Colonic mucosa (tissue), 4 donors: ENCODE measurements at regions of chr3 and their contacts with region 1.

Region 1: DNA sequence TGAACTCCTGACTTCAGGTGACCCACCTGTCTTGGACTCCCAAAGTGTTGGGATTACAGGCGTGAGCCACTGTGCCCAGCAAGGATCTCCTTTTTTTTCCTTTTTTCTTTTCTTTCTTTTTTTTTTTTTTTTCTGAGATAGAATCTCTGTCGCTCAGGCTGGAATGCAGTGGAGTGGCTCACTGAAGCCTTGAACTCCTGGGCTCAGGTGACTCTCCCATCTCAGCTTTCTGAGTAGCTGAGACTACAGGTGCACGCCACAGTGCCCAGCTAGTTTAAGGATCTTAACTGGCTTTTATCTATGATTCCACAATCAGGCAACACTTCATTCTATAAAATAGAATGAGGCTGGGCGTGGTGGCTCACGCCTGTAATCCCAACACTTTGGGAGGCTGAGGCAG is 16.3 kb upstream of the NICN1 start:
- DNase-seq: no peak
- H3K4me3 ChIP-seq: no peak overlapping the region
- H3K27ac ChIP-seq: no peak overlapping the region
- H3K4me1 ChIP-seq: no peaks in the 10 kb centered on the region
- H3K27me3 ChIP-seq: no peaks in the 10 kb centered on the region
- CTCF ChIP-seq: no peak

Region 2: DNA sequence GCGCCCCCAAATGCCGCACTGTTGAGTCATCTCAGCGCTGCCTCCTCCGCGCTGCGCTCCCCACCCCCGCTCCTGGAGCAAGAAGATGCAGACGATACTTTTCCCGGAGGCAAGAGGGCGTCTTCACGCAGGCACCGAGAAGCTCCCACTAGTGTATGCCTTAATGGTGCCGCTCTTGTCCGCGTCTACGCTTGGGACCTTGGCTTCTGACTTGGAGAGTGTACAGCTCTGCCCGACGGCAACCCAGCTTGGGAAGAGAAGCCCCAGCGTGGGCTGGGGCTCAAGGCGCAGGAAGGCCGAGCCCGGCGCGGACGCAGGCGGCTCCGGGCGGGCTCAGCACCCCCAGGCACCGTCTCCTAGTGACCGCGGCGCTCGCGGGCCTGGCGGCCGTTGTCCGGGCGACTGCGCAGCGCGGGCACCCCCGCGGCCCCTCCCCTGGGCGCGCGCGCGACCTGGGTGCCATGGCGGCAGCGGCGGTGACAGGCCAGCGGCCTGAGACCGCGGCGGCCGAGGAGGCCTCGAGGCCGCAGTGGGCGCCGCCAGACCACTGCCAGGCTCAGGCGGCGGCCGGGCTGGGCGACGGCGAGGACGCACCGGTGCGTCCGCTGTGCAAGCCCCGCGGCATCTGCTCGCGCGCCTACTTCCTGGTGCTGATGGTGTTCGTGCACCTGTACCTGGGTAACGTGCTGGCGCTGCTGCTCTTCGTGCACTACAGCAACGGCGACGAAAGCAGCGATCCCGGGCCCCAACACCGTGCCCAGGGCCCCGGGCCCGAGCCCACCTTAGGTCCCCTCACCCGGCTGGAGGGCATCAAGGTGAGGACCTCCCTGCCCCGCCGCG is 455.4 kb before region 1 on chr3 and contains the start of gene P4HTM:
- intact Hi-C with region 1: loop called (anchors 5 kb)
- DNase-seq: peak; percentile 90
- H3K4me3 ChIP-seq: peak within 1 kb of the TSS; percentile 99
- H3K27ac ChIP-seq: peak within 1 kb of the TSS; percentile 94
- H3K4me1 ChIP-seq: peaks cover 16% of the 10 kb centered on the region
- H3K27me3 ChIP-seq: no peaks in the 10 kb centered on the region
- CTCF ChIP-seq: peak; percentile 23
- total RNA-seq, gene P4HTM: 34.9 to 73.9 TPM

Region 3: DNA sequence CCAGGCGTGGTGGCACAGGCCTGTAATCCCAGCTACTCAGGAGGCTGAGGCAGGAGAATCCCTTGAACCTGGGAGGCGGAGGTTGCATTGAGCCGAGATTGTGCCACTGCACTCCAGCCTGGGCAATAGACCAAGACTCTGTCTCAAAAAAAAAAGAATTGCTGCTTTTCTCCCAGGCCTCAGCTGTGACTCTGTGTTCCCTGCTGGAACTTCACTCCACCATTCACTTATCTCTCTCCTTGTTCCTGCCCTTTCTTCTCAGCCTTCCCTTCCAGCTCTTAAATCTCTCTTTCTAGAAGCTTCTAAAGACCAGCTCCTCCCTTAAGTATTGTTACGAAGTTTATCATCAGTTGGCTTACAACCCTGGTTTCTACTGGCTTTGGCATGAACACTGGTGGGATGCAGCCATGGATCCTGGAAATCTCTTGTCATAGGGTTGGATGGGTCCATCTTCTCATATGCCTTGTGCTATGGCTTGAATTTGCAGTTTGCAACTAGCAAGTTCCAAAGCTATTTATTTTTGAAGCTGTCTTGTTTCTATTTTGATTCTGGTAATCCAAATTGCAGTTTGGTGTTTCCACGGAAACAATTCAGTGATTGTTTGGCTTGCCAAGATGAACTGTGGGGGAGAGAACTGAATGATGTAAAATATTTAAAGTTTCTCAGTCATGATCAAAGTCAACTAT is 178.8 kb before region 1 on chr3:
- intact Hi-C with region 1: no loop called
- DNase-seq: no peak
- H3K4me3 ChIP-seq: no peak overlapping the region
- H3K27ac ChIP-seq: no peak overlapping the region
- H3K4me1 ChIP-seq: no peaks in the 10 kb centered on the region
- H3K27me3 ChIP-seq: no peaks in the 10 kb centered on the region
- CTCF ChIP-seq: no peak

Region 4: GRCh38 chr3:49295489-49296058 is 149.8 kb before region 1 on chr3:
- intact Hi-C with region 1: loop called (anchors 5 kb)
- DNase-seq: no peak
- H3K4me3 ChIP-seq: no peak overlapping the region
- H3K27ac ChIP-seq: no peak overlapping the region
- H3K4me1 ChIP-seq: no peaks in the 10 kb centered on the region
- H3K27me3 ChIP-seq: no peaks in the 10 kb centered on the region
- CTCF ChIP-seq: peak; percentile 52

Region 5: DNA sequence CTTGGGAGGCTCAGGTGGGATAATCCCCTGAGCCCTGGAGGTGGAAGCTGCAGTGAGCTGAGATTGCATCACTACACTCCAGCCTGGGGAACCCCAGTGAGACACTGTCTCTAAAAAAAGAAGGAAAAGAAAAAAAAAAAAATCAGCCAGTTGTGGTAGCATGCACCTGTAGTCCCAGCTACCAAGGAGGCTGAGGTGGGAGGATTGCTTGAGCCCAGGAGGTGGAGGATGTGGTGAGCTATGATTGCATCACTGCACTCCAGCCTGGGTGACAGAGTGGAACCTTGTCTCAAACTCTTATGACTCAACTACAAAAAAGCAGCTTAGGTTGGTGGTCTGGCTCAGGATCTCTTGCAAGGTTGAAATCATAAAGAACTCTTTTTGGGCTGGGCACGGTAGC is 67.9 kb before region 1 on chr3:
- intact Hi-C with region 1: no loop called
- DNase-seq: no peak
- H3K4me3 ChIP-seq: no peak overlapping the region
- H3K27ac ChIP-seq: no peak overlapping the region
- H3K4me1 ChIP-seq: peaks cover under 1% of the 10 kb centered on the region
- H3K27me3 ChIP-seq: no peaks in the 10 kb centered on the region
- CTCF ChIP-seq: no peak

Region 6: GRCh38 chr3:49512771-49513358 is 67.5 kb after region 1 on chr3:
- intact Hi-C with region 1: no loop called
- DNase-seq: no peak
- H3K4me3 ChIP-seq: no peak overlapping the region
- H3K27ac ChIP-seq: no peak overlapping the region
- H3K4me1 ChIP-seq: no peaks in the 10 kb centered on the region
- H3K27me3 ChIP-seq: no peaks in the 10 kb centered on the region
- CTCF ChIP-seq: no peak

Region 7: DNA sequence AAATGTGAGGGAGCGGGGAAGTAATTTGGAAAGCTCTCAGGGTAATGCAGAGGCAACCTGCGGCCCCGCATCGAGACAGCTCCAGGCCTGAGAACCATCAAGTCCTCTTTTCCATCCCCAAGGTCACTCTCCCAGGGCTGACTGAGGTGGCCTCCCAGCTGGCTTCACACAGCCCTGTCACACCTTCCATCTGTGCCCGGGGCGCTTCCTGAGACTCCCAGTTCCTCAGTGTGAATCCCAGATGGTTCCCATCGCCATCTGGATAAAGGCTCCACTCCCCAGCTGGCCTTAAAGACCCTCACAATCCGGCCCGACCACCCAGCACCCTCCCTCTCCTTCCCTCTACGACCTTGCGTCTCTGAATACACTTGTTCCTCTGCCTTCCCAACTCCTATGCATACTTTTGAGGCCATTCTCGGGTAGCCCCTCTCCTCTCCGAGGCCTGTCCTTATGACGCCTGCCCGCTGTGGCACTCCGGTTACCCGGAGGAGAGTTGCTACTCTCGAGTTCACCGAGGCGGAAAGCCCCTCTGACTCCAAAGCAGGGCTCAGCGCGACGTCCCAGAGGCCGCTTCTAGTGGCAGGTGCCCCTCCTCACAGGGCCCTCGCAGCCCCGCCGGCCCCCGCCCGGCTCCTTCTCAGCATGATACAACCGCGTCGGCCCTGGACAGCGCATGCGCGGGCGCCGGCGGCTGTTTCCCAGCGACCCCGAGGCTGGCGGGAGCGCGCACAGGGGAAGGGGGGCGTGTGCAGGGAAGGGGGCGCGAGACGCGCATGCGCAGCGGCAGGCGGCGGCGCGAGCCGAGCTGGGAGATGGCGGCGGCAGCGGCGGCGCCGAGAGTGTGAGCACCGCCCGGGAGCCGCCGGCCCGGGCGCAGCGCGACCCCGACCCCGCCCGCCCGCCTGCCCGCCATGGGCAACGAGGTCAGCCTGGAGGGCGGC is 108.6 kb after region 1 on chr3 and contains the start of gene BSN:
- intact Hi-C with region 1: no loop called
- DNase-seq: peak; percentile 82
- H3K4me3 ChIP-seq: peak within 1 kb of the TSS; percentile 57
- H3K27ac ChIP-seq: no peak within 1 kb of the TSS
- H3K4me1 ChIP-seq: peaks cover 4% of the 10 kb centered on the region
- H3K27me3 ChIP-seq: no peaks in the 10 kb centered on the region
- CTCF ChIP-seq: no peak
- total RNA-seq, gene BSN: 0.17 to 0.21 TPM